H1 (cell line): ENCODE measurements at regions of chr7 and their contacts with region 1.

Region 1: DNA sequence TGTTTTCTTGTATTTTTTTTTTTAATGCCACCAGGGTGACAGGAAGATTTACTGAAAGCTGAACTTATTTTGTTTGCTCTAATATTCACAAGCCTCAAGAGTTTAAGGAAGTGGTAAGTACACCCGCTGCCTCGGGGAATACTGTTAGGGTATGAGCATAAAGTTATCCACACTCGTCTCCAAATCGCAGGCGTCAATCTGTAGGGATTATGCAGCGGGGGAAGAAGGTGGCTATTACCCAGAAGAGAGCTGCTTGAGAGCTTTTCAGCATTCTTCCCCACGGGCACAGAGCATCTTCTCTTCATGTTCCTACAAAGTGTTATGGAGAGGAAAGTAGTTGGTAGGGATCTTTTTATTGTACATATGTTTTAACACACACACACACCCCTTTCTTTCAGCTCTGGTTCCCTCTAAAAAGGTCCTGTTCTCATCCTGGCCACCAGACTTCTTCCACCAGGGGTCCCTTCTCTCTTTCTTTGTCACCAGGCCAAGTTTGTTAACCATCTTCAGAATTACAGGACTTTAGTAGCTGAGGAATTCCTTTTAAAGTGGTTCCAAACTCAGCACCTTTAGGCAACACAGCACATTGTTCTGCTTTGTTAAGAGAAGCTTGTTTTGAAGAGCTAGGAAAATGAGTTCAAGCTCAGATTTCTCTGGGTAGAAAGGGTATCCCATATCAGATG is 411.6 kb upstream of the GALNT17 start:
- DNase-seq: no peak
- H3K4me3 ChIP-seq: no peak overlapping the region
- H3K27ac ChIP-seq: no peak overlapping the region
- H3K4me1 ChIP-seq: peaks cover 1 to 21% (median 7%) of the 10 kb centered on the region in 4 experiments; a peak in 6 of 7 replicates
- H3K27me3 ChIP-seq: no peaks in the 10 kb centered on the region
- CTCF ChIP-seq: peak in 2 of 3 experiments; percentile 9 to 13; a peak in 2 of 4 replicates
- EP300 ChIP-seq: no peak
- POLR2A ChIP-seq: no peak
- RAD21 ChIP-seq: peak in 1 of 2 experiments; percentile 15; a peak in 1 of 4 replicates

Region 2: GRCh38 chr7:70710011-70710480 is 10.3 kb before region 1 on chr7:
- CTCF ChIA-PET with region 1: interaction called, 13 read pairs
- POLR2A ChIA-PET with region 1: interaction called, 6 read pairs
- DNase-seq: no peak
- H3K4me3 ChIP-seq: no peak overlapping the region
- H3K27ac ChIP-seq: no peak overlapping the region
- H3K4me1 ChIP-seq: peaks cover 20 to 31% (median 27%) of the 10 kb centered on the region in 4 experiments
- H3K27me3 ChIP-seq: no peaks in the 10 kb centered on the region
- CTCF ChIP-seq: no peak
- EP300 ChIP-seq: no peak
- POLR2A ChIP-seq: no peak
- RAD21 ChIP-seq: no peak

Region 3: DNA sequence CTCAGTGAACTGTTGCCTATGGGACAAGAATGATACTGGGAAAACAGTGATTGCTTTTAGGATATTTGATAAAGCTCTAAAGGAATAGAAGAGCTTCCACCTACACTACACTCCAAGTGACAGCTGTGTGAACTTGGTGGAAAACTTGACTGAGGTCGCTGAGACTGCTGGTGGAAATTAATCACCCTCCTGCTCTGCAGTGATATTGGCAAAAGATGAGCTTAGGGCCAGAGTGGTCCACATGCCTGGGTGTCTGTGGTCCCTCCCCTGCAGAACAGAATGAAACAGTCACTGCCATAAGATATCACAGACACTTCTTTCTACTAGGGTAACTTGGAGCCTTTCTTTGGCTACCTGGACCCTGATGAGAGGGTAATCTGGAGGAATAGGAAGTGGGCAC is 29.5 kb after region 1 on chr7:
- CTCF ChIA-PET with region 1: interaction called, 10 read pairs
- POLR2A ChIA-PET with region 1: interaction called, 5 read pairs
- DNase-seq: no peak
- H3K4me3 ChIP-seq: no peak overlapping the region
- H3K27ac ChIP-seq: no peak overlapping the region
- H3K4me1 ChIP-seq: peaks cover 1 to 12% (median 7%) of the 10 kb centered on the region in 4 experiments
- H3K27me3 ChIP-seq: no peaks in the 10 kb centered on the region
- CTCF ChIP-seq: no peak
- EP300 ChIP-seq: no peak
- POLR2A ChIP-seq: no peak
- RAD21 ChIP-seq: no peak

Region 4: GRCh38 chr7:70775570-70776156 is 55.3 kb after region 1 on chr7:
- CTCF ChIA-PET with region 1: interaction called, 16 read pairs
- POLR2A ChIA-PET with region 1: interaction called, 3 read pairs
- DNase-seq: no peak
- H3K4me3 ChIP-seq: no peak overlapping the region
- H3K27ac ChIP-seq: no peak overlapping the region
- H3K4me1 ChIP-seq: peaks cover 0 to 11% (median 8%) of the 10 kb centered on the region in 4 experiments; a peak in 6 of 7 replicates
- H3K27me3 ChIP-seq: no peaks in the 10 kb centered on the region
- CTCF ChIP-seq: peak in 2 of 3 experiments; percentile 42 to 67; a peak in 3 of 4 replicates
- EP300 ChIP-seq: no peak
- POLR2A ChIP-seq: no peak
- RAD21 ChIP-seq: peak; percentile 56 to 67